Posterior cingulate gyrus (tissue), 11 donors: ENCODE measurements at regions of chr9 and their contacts with region 1.

Region 1: DNA sequence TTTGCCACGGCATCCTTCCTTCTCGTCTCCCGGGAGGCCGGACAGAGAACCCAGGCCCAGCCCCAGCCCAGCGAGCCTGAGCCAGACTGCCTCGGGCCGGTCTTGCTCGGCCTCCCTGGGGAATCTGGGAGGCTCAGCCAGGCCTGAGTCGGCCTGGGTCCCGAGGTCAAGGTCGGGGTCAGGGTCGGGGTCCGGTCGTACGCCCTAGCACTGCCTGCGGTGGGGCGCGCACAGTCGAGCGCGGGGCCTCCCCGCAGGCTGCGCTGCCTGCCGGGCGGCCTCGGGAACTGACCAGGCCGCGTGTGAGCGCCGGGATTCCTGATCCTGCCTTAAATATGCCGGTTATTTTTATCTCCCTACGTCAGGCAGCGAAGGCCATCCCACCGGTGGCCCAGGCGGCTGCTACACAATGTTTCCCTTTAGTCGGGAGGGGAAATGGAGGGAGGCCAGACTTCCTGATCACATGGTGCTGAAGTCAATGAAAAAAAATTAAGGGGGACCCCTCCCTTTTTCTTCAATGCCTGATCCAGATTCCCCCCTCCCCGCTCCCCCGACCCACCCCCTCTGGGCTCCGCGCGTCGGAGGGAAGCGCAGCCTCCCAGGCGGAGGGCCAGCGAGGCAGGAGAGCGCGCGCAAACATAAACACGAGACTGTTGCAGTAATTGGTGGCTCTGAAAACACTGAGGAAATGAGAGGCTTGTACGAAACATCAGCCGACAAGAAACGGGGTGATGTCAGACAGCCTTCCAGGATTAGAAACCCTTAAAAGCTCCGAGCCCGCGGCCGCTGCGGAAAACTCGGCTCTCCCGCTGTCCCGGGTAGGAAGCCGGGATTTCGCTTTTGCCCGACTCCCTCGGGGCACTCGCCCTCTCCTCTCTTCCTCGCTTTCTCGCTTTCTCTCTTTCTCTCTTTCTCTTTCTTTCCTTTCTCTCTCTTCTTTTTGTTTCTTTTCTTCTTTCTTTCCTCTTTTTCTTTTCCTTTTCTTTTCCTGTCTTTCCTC is 148.2 kb upstream of the KLF4 start:
- DNase-seq: peak; percentile 57 to 94 (median 69)

Region 2: DNA sequence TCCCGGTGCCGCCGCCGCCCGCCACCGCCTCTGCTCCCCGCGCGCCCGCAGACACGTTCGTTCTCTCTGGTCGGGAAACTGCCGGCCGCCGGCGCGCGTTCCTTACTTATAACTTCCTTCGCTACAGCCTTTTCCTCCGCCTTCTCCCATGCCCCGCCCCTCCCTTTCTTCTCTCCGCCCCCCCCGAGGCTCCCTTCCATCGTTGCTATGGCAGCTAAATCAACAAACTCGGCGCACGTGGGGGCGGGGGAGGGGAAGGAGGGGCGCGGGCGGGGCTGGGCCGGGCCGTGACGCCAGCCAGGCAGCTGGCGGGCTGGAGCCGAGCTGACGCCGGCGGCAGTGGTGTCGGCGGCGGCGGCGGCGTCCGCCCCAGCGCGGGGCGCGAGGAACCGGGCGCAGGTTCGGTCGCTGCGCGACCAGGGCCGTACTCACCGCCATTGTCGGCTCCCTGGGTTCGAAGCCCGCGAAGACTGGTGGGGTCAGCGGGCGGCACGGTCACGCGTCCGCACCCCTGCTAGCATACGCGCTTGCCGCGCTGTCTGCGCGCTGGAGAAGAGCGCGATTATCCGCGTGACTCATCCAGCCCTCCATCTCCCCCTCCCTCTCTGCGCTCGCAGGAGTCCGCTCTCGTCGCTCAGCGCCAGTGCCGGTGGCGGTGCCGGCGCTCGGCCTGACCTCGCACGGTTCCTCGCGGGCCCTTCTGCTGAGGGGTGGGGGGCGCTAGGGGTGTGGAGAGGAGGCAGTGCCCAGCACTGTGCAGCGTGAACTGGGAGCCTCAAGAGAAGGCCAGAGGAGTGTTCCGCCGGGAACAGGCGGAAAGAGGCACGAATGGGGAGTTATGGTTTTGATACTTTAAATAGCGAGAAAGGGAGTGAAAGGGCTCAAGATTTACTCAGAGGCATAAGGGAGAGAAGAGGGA is 147.8 kb before region 1 on chr9 and contains the start of gene KLF4:
- intact Hi-C with region 1: loop called (anchors 1 kb)
- DNase-seq: peak; percentile 65 to 97 (median 78)